Mammary epithelial cell (primary cell): ENCODE measurements at regions of chr9 and their contacts with region 1.

Region 1: DNA sequence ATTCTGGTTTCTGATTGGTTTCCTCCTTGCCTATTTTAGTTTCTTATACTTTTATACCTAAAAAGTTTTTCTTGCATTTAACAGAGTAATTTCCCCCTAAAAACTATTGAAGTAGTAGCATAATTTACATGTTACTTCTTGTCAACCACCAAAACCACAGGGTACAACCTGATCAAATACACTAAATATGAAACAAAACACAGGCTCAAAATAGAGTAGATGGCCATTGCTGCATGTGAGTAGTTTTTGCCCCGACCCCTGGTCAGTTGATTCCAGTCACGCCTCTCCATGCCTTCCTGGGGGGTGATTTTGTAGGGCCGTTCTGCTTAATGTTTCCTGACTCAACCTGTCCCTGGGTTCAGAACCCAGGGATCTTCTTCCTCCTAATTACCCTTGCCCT is 101.8 kb downstream of the TLE4 start:
- DNase-seq: no peak
- H3K4me3 ChIP-seq: no peak overlapping the region
- H3K27ac ChIP-seq: no peak overlapping the region
- H3K4me1 ChIP-seq: peaks cover 38% of the 10 kb centered on the region
- H3K27me3 ChIP-seq: no peaks in the 10 kb centered on the region
- CTCF ChIP-seq: no peak

Region 2: GRCh38 chr9:79610791-79611614 is 62.6 kb before region 1 on chr9:
- CTCF ChIA-PET with region 1: no interaction called
- dilution Hi-C with region 1: no loop called
- in situ Hi-C with region 1: no loop called
- intact Hi-C with region 1: loop called (anchors 5 kb)
- DNase-seq: peak; percentile 79
- H3K4me3 ChIP-seq: no peak overlapping the region
- H3K27ac ChIP-seq: no peak overlapping the region
- H3K4me1 ChIP-seq: peaks cover 7% of the 10 kb centered on the region
- H3K27me3 ChIP-seq: no peaks in the 10 kb centered on the region
- CTCF ChIP-seq: no peak